Activated CD4-positive, alpha-beta T cell treated with anti-CD3 and anti-CD28 coated beads, Interleukin-2, amount 10 ng/mL, durations not matched to agents 24 days and 14 days (primary cell): ENCODE measurements at regions of chr15 and their contacts with region 1.

Region 1: DNA sequence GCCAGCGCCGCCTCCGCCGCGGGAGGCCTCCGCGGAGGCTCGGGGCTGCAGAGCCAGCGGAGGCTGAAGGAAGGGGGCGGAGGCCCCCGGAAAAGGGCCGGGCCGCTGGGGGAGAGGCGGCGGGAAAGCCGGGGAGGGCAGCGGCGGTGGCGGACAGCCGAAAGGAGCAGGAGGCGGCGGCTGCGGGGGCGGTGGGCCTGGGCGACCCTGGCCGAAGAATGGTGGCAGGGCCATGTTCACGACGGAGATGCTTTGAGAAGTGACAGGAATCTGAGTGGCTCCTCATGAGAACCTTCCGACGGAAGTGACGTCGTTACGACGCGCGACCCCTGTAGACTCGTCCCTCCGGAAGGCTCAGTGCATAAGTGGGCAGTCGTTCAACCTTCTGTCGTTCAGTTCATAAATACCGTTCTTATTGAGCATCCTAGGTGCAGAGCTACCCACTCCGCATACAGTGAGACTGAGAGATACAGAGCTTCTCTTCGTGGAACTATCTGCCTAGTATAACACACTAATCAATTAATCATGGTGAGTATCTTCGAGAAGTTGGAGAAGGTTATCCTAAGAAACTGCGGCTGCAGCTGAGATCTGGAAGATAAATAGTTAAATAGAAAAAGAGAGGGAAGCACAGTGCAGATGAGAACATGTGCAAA is at the start of gene PDCD7:
- DNase-seq: peak; percentile 96
- H3K4me3 Mint-ChIP-seq: peak within 1 kb of the TSS; percentile 91
- H3K27ac Mint-ChIP-seq: peak within 1 kb of the TSS; percentile 89
- H3K4me1 Mint-ChIP-seq: peaks cover 25% of the 10 kb centered on the region
- H3K27me3 Mint-ChIP-seq: no peaks in the 10 kb centered on the region
- total RNA-seq, gene PDCD7: 59.9 and 60.1 TPM in 2 replicates

Region 2: GRCh38 chr15:64387562-64388168 is 746.0 kb before region 1 on chr15 and contains the start of gene TRIP4:
- intact Hi-C with region 1: loop called (anchors 2 kb)
- DNase-seq: peak; percentile 99
- H3K4me3 Mint-ChIP-seq: peak within 1 kb of the TSS; percentile 97
- H3K27ac Mint-ChIP-seq: peak within 1 kb of the TSS; percentile 93
- H3K4me1 Mint-ChIP-seq: peaks cover 13% of the 10 kb centered on the region
- H3K27me3 Mint-ChIP-seq: no peaks in the 10 kb centered on the region
- total RNA-seq, gene TRIP4: 21.1 and 23.9 TPM in 2 replicates

Region 3: GRCh38 chr15:64989416-64990167 is 144.1 kb before region 1 on chr15 and contains the start of gene SPG21:
- intact Hi-C with region 1: loop called (anchors 5 kb)
- DNase-seq: peak; percentile 98
- H3K4me3 Mint-ChIP-seq: peak within 1 kb of the TSS; percentile 94
- H3K27ac Mint-ChIP-seq: peak within 1 kb of the TSS; percentile 89
- H3K4me1 Mint-ChIP-seq: peaks cover 42% of the 10 kb centered on the region
- H3K27me3 Mint-ChIP-seq: no peaks in the 10 kb centered on the region
- total RNA-seq, gene SPG21: 70.4 and 76.2 TPM in 2 replicates

Region 4: DNA sequence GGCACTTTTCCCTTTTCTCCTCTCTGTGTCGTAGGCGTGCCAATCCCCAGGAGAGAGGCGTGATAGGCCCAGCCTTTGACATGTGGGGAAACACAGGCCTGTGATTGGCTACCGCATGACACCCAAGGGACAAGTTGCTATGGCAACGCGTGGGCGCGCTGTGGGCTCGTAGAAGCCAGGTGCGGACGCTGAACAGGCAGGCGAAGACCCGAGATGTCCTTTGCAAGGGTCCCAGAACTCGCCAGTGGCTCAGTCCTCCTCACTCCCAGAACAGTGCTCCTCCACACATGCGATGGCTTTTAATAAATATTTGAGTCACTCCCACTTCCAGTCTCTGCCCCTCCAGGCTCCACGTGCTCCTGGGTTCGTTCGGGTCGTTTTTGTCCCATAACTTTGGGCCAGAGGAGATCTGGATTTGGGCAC is 84.2 kb before region 1 on chr15:
- intact Hi-C with region 1: loop called (anchors 10 kb)
- DNase-seq: peak; percentile 95
- H3K4me3 Mint-ChIP-seq: peak overlapping the region; percentile 66
- H3K27ac Mint-ChIP-seq: peak overlapping the region; percentile 45
- H3K4me1 Mint-ChIP-seq: peaks cover 11% of the 10 kb centered on the region
- H3K27me3 Mint-ChIP-seq: peaks cover 7% of the 10 kb centered on the region

Region 5: GRCh38 chr15:65115542-65115941 is 18.1 kb before region 1 on chr15:
- intact Hi-C with region 1: no loop called
- DNase-seq: no peak
- H3K4me3 Mint-ChIP-seq: no peak overlapping the region
- H3K27ac Mint-ChIP-seq: no peak overlapping the region
- H3K4me1 Mint-ChIP-seq: peaks cover 4% of the 10 kb centered on the region
- H3K27me3 Mint-ChIP-seq: no peaks in the 10 kb centered on the region

Region 6: GRCh38 chr15:65184868-65185738 is 51.4 kb after region 1 on chr15 and contains the start of gene CLPX:
- intact Hi-C with region 1: loop called (anchors 1 kb)
- DNase-seq: peak; percentile 97
- H3K4me3 Mint-ChIP-seq: peak within 1 kb of the TSS; percentile 94
- H3K27ac Mint-ChIP-seq: peak within 1 kb of the TSS; percentile 91
- H3K4me1 Mint-ChIP-seq: peaks cover 22% of the 10 kb centered on the region
- H3K27me3 Mint-ChIP-seq: peaks cover 1% of the 10 kb centered on the region
- total RNA-seq, gene CLPX: 62.8 and 63.5 TPM in 2 replicates

Region 7: GRCh38 chr15:65286704-65287519 is 153.2 kb after region 1 on chr15 and contains the start of gene PARP16:
- intact Hi-C with region 1: loop called (anchors 2 kb)
- DNase-seq: peak; percentile 98
- H3K4me3 Mint-ChIP-seq: peak within 1 kb of the TSS; percentile 88
- H3K27ac Mint-ChIP-seq: peak within 1 kb of the TSS; percentile 86
- H3K4me1 Mint-ChIP-seq: peaks cover 27% of the 10 kb centered on the region
- H3K27me3 Mint-ChIP-seq: no peaks in the 10 kb centered on the region
- total RNA-seq, gene PARP16: 11.7 TPM in 2 replicates